Breast epithelium (tissue), 4 donors: ENCODE measurements at regions of chr2 and their contacts with region 1.

Region 1: DNA sequence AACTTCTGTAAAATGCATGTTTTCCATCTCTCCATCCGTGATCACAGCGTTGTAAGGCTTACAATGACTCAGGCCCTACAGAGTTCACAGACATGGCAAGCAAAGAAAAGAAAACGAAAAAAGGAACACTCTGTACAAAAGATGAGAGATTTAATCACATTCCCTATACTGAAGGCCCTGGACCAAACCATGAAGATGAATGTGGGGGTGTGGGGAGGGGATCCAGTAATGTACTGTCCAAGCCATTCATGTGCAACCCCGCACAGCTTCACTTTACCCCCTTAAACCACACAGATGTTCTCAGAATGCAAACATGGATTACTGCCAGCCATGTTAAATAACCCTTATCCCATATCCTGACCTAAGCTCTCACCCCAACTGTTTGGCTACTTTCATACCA is 391.1 kb downstream of the NCKAP5 start:
- DNase-seq: no peak
- H3K4me3 ChIP-seq: no peak overlapping the region
- H3K27ac ChIP-seq: no peak overlapping the region
- H3K4me1 ChIP-seq: no peaks in the 10 kb centered on the region
- H3K27me3 ChIP-seq: no peaks in the 10 kb centered on the region
- CTCF ChIP-seq: no peak
- POLR2A ChIP-seq: no peak

Region 2: GRCh38 chr2:133200684-133201421 is 23.7 kb after region 1 on chr2:
- intact Hi-C with region 1: no loop called
- DNase-seq: no peak
- H3K4me3 ChIP-seq: no peak overlapping the region
- H3K27ac ChIP-seq: no peak overlapping the region
- H3K4me1 ChIP-seq: no peaks in the 10 kb centered on the region
- H3K27me3 ChIP-seq: no peaks in the 10 kb centered on the region
- CTCF ChIP-seq: no peak
- POLR2A ChIP-seq: no peak

Region 3: DNA sequence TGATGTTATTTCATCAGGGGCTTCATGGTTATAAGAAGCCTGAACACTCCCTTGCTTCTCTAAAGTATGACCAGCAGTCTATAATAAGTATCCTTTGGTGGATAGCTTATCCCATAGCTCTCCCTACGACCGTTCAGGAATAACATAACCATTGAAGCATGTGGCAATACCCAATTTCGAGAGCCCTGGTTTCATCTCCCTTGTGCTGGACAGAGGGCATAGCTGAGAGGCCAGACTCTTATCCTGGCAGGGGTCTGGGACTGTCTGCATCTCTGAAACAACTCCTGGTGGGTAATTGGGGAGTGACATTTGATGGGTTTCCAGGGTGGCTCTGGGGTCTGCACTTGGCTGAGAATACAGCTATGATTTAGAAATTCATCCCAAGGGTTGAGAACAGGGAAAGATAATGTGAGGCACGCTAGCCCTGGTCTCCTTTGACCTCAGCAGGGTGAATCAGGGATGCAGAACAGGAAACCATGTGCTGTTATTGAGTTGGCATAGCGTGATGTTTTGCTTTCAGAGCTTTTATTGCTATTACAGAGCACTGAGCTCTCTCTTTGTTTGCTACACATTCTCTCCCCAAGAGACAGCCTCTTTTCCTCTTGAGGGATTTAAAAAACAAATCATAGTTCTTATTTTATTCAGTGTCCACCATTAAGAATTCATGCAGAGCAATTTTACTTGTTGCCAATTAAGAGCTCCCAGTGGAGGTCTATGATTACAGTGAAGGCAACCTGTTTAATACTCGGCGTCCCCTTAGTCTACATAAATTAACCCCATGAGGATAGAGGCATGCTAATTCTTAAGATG is 116.6 kb after region 1 on chr2:
- intact Hi-C with region 1: no loop called
- DNase-seq: no peak
- H3K4me3 ChIP-seq: no peak overlapping the region
- H3K27ac ChIP-seq: no peak overlapping the region
- H3K4me1 ChIP-seq: no peaks in the 10 kb centered on the region
- H3K27me3 ChIP-seq: no peaks in the 10 kb centered on the region
- CTCF ChIP-seq: no peak
- POLR2A ChIP-seq: no peak

Region 4: GRCh38 chr2:133414486-133415209 is 237.5 kb after region 1 on chr2:
- intact Hi-C with region 1: loop called (anchors 5 kb)
- DNase-seq: no peak
- H3K4me3 ChIP-seq: no peak overlapping the region
- H3K27ac ChIP-seq: no peak overlapping the region
- H3K4me1 ChIP-seq: no peaks in the 10 kb centered on the region
- H3K27me3 ChIP-seq: no peaks in the 10 kb centered on the region
- CTCF ChIP-seq: no peak
- POLR2A ChIP-seq: no peak